Kidney (tissue), 22 donors: ENCODE measurements at regions of chr6 and their contacts with region 1.

Region 1: DNA sequence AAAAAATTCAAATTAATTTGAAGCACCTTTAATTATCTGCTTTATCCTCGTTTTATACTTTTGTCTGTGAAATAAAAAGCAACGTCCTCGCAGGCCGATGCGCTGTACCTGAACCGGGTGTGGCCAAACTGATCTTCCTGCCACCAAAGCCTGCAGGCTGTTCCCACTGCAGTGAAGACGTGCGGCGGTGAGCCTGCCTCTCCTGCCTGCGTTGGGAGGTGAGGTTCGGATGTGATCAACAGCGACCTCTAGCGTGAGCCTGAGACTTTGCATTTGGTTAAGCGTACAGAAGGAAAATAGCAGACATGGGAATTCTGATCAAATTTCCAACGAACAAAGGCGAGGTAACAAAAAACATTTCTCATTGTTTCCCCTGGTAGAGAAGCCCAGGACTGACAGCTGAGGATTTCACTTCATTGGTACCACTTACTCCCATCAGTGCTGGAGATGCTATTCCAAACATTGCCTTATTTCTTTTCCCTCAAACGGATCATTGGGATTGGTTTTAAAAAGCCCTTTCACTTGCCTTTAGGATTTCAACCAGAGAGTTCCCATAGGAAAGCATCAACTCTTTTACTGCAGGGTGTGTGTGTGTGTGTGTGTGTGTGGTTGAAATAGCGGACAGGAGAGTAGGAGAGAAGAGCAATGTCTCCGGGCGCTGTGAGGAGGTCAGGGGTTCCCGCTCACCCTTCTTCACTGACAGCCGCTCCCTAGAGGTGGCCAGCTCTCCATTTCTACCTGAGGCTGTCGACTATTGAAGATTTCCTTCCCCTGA is 56.6 kb upstream of the CCN6 start:
- DNase-seq: peak; percentile 88 to 93 (median 92)
- H3K4me3 ChIP-seq: peak overlapping the region in 1 of 3 donors; percentile 20
- H3K27ac ChIP-seq: no peak overlapping the region
- H3K4me1 ChIP-seq: no peaks in the 10 kb centered on the region
- H3K27me3 ChIP-seq: no peaks in the 10 kb centered on the region
- CTCF ChIP-seq: peak; percentile 96

Region 2: GRCh38 chr6:111709615-111710398 is 287.5 kb before region 1 on chr6:
- intact Hi-C with region 1: loop called (anchors 5 kb)
- DNase-seq: peak in 4 of 5 donors; percentile 67 to 91 (median 84)
- H3K4me3 ChIP-seq: peak overlapping the region; percentile 22 to 59 (median 40)
- H3K27ac ChIP-seq: no peak overlapping the region
- H3K4me1 ChIP-seq: peaks cover 0 to 5% (median 4%) of the 10 kb centered on the region in 3 donors
- H3K27me3 ChIP-seq: no peaks in the 10 kb centered on the region
- CTCF ChIP-seq: peak; percentile 64

Region 3: DNA sequence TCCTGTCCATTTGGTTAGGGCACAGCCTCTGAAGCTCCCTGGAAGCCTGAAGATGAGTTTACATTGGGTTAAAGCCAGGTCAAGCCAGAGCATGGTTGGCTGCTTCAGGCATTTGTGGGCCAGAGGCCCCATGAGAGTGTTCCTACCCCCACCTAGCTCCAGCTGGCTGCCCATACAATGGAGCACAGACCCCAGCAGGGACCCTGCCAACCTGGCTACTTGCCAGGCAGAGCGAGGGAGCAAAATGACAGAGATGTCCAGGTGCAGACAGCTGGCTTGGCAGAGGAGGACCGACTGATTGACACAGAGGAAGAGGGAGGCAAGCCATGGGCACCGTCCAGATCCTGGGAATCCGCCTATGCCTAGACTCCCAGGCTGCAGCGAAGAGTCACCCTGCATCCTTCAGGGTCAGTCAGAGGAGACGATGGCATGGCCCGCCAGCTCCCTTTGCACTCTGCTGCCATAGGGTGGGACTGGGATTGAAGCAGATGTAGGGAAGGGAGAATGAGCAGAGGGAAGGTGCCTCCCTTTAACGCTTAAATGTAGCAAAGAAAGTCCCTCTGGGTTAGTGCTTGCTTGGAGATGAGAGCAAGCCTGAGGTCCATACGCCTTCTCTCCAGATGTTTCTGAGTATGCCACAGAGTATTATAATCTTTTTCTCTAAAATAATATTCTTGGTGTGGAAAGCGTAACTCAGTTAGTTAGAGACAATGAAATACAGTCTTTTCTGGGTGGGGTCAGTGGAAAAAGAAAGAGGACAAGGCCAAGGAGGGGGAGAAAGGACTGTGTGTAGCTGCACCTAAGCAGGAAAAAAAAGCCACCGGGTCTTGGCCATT is 46.4 kb before region 1 on chr6:
- intact Hi-C with region 1: no loop called
- DNase-seq: peak; percentile 55 to 93 (median 90)
- H3K4me3 ChIP-seq: no peak overlapping the region
- H3K27ac ChIP-seq: no peak overlapping the region
- H3K4me1 ChIP-seq: peaks cover 0 to 5% (median 0%) of the 10 kb centered on the region in 3 donors
- H3K27me3 ChIP-seq: no peaks in the 10 kb centered on the region
- CTCF ChIP-seq: no peak